K562 (cell line): ENCODE measurements at regions of chr5 and their contacts with region 1.

Region 1: GRCh38 chr5:61658592-61659008 is 326.5 kb downstream of the ZSWIM6 start:
- DNase-seq: peak; percentile 71 to 86 (median 82)
- ATAC-seq: peak; percentile 97
- H3K4me3 ChIP-seq: no peak overlapping the region
- H3K27ac ChIP-seq: no peak overlapping the region
- H3K4me1 ChIP-seq: no peaks in the 10 kb centered on the region
- H3K27me3 ChIP-seq: peaks cover 10 to 37% of the 10 kb centered on the region in 2 experiments; a peak in 4 of 5 replicates
- CTCF ChIP-seq: peak; percentile 80 to 93 (median 83)
- EP300 ChIP-seq: no peak
- POLR2A ChIP-seq: no peak
- RAD21 ChIP-seq: peak; percentile 68 to 83

Region 2: GRCh38 chr5:60960591-60960990 is 698.0 kb before region 1 on chr5:
- CTCF ChIA-PET with region 1: interaction called, 5 read pairs
- POLR2A ChIA-PET with region 1: no interaction called
- in situ Hi-C with region 1: no loop called
- intact Hi-C with region 1: loop called (anchors 2 kb)
- DNase-seq: peak in 2 of 4 experiments; percentile 23 to 32
- ATAC-seq: peak; percentile 51; the same call in 1 of the 3 replicates
- H3K4me3 ChIP-seq: no peak overlapping the region
- H3K27ac ChIP-seq: no peak overlapping the region
- H3K4me1 ChIP-seq: no peaks in the 10 kb centered on the region
- H3K27me3 ChIP-seq: no peaks in the 10 kb centered on the region
- CTCF ChIP-seq: peak; percentile 35 to 53 (median 42); a peak in 3 of 6 replicates
- EP300 ChIP-seq: no peak
- POLR2A ChIP-seq: no peak
- RAD21 ChIP-seq: peak; percentile 53 to 66

Region 3: DNA sequence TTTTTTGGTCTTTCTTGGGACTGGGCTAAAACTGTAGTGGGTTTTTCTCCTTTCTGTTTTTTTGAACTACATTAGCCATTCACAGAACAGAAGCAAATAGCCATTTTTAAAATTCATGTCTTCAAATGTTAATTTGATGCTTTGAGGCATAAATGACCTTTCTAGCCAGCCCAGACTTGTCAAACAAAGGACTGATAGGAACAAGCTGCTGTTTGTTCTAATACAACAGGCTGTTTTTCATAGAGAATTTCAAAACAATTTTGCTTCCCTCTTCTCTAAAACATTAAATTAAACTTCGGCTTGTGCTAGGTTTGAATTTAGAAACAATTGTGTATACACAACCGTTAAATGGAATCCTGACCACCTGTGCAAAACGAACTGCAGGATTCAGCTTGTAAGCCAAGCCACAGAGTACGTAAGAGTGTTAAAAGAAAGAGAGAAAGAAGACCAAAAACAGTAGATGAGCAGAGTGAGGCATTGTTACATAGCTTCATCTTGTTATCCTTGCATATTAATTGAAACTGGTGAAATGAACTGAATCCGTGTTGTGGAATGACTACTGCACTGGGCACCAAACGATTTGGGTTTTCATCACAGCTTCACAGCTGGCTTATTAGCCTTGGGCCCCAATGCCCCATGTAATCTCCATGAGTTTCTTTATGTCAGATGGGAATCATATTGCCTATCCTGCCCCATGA is 226.5 kb before region 1 on chr5:
- CTCF ChIA-PET with region 1: no interaction called
- POLR2A ChIA-PET with region 1: no interaction called
- in situ Hi-C with region 1: no loop called
- intact Hi-C with region 1: loop called (anchors 10 kb)
- DNase-seq: no peak
- ATAC-seq: no peak
- H3K4me3 ChIP-seq: no peak overlapping the region
- H3K27ac ChIP-seq: no peak overlapping the region
- H3K4me1 ChIP-seq: no peaks in the 10 kb centered on the region; a peak in 1 of 5 replicates
- H3K27me3 ChIP-seq: peaks cover 4% of the 10 kb centered on the region in 2 experiments; a peak in 2 of 5 replicates
- CTCF ChIP-seq: no peak
- EP300 ChIP-seq: no peak
- POLR2A ChIP-seq: no peak
- RAD21 ChIP-seq: no peak